Mammary epithelial cell (primary cell): ENCODE measurements at regions of chr10 and their contacts with region 1.

Region 1: GRCh38 chr10:93126484-93127052 is 52.9 kb downstream of the CYP26A1 start:
- DNase-seq: no peak
- H3K4me3 ChIP-seq: no peak overlapping the region
- H3K27ac ChIP-seq: no peak overlapping the region
- H3K4me1 ChIP-seq: no peaks in the 10 kb centered on the region
- H3K27me3 ChIP-seq: no peaks in the 10 kb centered on the region
- CTCF ChIP-seq: peak; percentile 52 to 56

Region 2: DNA sequence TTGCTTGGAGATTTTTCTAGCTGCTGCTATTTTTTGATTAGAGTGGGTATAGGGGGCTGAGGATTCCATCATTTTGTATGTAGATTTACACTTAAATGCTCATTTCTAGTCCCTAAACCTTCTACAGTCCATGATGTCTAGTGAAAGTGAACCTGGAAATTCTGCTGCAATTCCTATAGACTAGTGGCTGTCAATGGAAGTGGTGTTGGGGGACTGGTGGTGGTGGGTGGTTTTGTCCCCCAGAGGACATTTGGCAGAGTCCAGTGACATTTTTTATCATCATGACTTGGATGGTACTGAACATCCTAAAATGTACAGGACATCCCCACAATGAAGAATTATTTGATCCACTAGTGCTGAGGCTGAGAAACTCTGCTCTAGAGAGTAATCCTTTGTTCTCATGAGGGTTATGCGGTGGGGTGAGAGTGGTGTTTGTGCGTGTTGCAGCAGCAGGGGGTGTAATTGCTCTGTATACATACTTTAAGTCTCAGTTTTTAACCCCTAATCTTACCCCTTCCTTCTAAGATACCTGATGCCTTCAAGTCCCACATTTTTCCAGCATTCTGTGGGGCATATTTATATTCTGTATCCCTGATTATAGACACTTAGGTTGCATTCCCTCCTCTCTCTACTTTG is 498.6 kb before region 1 on chr10:
- CTCF ChIA-PET with region 1: no interaction called
- dilution Hi-C with region 1: no loop called
- in situ Hi-C with region 1: no loop called
- intact Hi-C with region 1: no loop called
- DNase-seq: no peak
- H3K4me3 ChIP-seq: no peak overlapping the region
- H3K27ac ChIP-seq: no peak overlapping the region
- H3K4me1 ChIP-seq: no peaks in the 10 kb centered on the region
- H3K27me3 ChIP-seq: no peaks in the 10 kb centered on the region
- CTCF ChIP-seq: no peak

Region 3: DNA sequence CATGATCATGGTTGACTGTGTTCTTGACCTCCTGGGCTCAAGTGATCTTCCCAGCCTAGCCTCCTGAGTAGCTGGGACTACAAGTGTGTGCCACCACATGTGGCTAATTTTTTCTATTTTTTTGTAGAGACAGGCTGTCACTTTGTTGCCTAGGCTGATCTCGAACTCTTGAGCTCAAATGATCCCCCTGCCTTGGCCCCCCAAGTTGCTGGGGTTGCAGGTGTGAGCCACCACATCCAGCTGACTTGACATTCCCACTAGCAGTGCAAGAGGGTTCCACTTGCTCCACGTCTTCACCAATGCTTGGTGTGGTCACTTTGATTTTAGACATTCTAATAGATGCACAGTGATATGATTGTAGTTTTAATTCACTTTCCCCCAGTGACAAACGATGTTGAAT is 27.8 kb before region 1 on chr10:
- CTCF ChIA-PET with region 1: interaction called, 10 read pairs
- dilution Hi-C with region 1: no loop called
- in situ Hi-C with region 1: no loop called
- intact Hi-C with region 1: no loop called
- DNase-seq: no peak
- H3K4me3 ChIP-seq: no peak overlapping the region
- H3K27ac ChIP-seq: no peak overlapping the region
- H3K4me1 ChIP-seq: no peaks in the 10 kb centered on the region
- H3K27me3 ChIP-seq: no peaks in the 10 kb centered on the region
- CTCF ChIP-seq: no peak

Region 4: DNA sequence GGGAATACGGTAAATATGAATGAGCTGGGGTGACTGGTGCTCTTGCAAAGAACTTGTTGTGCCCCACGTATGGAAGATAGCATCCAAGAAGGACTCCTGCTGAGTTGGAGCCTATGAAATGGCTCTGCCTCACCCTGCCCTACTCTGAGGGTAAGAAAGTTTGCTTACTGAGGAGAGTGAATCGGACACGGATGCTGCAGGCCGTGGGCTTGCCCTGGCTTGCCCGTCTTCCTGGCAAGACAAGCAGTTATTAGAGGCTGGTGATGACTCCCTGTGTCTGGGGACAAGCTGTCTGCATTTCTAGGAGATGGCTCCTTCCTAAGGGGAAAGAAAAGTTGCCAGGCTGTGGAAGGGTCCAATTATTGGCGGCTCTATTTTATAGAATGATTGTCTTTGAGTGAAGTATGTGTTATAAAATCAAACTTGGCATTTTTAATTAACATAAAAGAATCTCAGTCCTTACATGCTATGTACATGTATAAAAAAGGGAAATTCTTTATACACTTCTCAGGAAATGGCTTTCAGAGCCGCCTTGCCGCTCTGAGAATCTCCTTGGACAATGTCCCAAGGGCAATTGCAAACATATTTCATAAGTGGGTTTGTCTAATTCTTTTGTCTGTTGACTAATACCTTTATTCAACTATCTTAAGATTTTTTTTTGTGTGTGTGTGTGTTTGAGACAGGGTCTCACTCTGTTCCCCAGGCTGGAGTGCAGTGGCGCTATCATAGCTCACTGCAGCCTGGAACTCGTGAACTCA is 11.7 kb after region 1 on chr10:
- CTCF ChIA-PET with region 1: interaction called, 10 read pairs
- dilution Hi-C with region 1: no loop called
- in situ Hi-C with region 1: no loop called
- intact Hi-C with region 1: no loop called
- DNase-seq: peak; percentile 89
- H3K4me3 ChIP-seq: no peak overlapping the region
- H3K27ac ChIP-seq: peak overlapping the region; percentile 62
- H3K4me1 ChIP-seq: peaks cover 16% of the 10 kb centered on the region
- H3K27me3 ChIP-seq: no peaks in the 10 kb centered on the region
- CTCF ChIP-seq: no peak

Region 5: GRCh38 chr10:93199191-93199751 is 72.7 kb after region 1 on chr10:
- CTCF ChIA-PET with region 1: no interaction called
- dilution Hi-C with region 1: loop called (anchors 5 kb)
- in situ Hi-C with region 1: no loop called
- intact Hi-C with region 1: no loop called
- DNase-seq: peak; percentile 6
- H3K4me3 ChIP-seq: no peak overlapping the region
- H3K27ac ChIP-seq: no peak overlapping the region
- H3K4me1 ChIP-seq: peaks cover 9% of the 10 kb centered on the region
- H3K27me3 ChIP-seq: no peaks in the 10 kb centered on the region
- CTCF ChIP-seq: no peak